Activated CD4-positive, alpha-beta T cell treated with anti-CD3 and anti-CD28 coated beads for 36 hours (primary cell): ENCODE measurements at regions of chr2 and their contacts with region 1.

Region 1: GRCh38 chr2:149587220-149587949 is at the start of gene MMADHC:
- DNase-seq: peak; percentile 96
- ATAC-seq: peak; percentile 99
- H3K4me3 Mint-ChIP-seq: peak within 1 kb of the TSS; percentile 92
- H3K27ac Mint-ChIP-seq: peak within 1 kb of the TSS; percentile 99
- H3K4me1 Mint-ChIP-seq: peaks cover 41% of the 10 kb centered on the region
- H3K27me3 Mint-ChIP-seq: peaks cover 12% of the 10 kb centered on the region
- total RNA-seq, gene MMADHC: 94.7 to 136 TPM

Region 2: GRCh38 chr2:148534416-148535204 is 1052.8 kb before region 1 on chr2:
- CTCF ChIA-PET with region 1: no interaction called
- POLR2A ChIA-PET with region 1: no interaction called
- intact Hi-C with region 1: loop called in 1 of 2 experiments (anchors 10 kb)
- DNase-seq: no peak
- ATAC-seq: no peak
- H3K4me3 Mint-ChIP-seq: no peak overlapping the region
- H3K27ac Mint-ChIP-seq: no peak overlapping the region
- H3K4me1 Mint-ChIP-seq: peaks cover 28% of the 10 kb centered on the region
- H3K27me3 Mint-ChIP-seq: no peaks in the 10 kb centered on the region

Region 3: DNA sequence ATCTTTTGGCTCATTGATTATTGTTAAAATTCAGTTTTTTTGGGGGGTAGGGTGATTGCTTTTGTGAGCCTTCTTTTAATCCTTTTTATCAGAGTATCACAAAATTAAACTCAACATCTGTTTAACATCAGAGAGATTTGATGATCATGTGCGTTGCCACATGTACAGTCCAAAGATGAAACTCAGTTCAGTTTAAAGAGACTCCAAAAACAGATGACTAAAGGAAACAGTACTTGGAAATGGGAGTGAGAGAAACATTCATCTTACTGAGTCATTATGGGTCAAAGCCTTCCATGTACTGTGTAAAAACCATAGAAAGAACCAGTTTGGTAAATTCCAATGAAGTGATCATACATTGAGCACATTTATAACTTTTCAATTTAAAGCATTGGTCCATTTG is 204.0 kb before region 1 on chr2:
- CTCF ChIA-PET with region 1: no interaction called
- POLR2A ChIA-PET with region 1: no interaction called
- intact Hi-C with region 1: no loop called
- DNase-seq: no peak
- ATAC-seq: peak; percentile 39
- H3K4me3 Mint-ChIP-seq: no peak overlapping the region
- H3K27ac Mint-ChIP-seq: no peak overlapping the region
- H3K4me1 Mint-ChIP-seq: no peaks in the 10 kb centered on the region
- H3K27me3 Mint-ChIP-seq: peaks cover 3% of the 10 kb centered on the region

Region 4: DNA sequence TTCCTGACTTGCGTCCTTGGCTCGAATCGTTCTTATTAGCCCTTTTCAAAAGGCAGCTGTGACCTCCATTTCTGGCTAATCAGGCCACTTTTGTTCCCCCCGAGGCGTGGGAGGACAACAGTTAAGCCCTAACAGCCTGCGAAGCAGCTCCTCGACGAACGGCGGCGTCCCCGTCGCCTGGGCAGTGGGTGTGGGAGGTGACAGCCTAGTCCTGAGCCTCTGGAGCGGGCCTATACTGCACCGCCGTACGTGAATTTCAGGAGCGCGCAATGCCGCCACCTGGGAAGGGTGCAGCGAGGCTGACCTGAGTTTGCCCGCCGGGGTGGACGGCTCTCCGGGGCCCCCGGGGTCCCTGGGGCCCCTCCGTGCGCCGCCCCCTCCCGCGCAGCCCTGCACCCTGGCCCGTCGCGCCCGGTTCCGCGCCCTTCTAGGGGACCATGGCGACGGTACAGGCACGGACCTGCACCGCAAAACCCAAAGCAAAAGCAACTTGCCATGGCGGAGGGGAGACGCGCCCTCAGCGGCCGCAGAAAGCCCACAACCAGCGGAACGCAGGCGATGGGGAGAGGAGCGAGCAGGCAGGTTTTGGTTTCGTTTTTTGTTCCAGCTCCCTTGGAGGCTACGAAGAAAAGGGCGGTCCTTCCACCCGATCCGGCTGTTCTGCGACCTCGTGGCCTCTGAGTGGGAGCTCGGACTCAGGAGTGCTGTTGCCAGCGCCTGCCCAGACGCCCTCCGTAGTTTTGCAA is 1674.0 kb after region 1 on chr2 and contains the start of gene RBM43:
- CTCF ChIA-PET with region 1: no interaction called
- POLR2A ChIA-PET with region 1: no interaction called
- intact Hi-C with region 1: loop called (anchors 1 to 2 kb)
- DNase-seq: peak; percentile 88
- ATAC-seq: peak; percentile 92
- H3K4me3 Mint-ChIP-seq: peak within 1 kb of the TSS; percentile 89
- H3K27ac Mint-ChIP-seq: peak within 1 kb of the TSS; percentile 98
- H3K4me1 Mint-ChIP-seq: peaks cover 18% of the 10 kb centered on the region
- H3K27me3 Mint-ChIP-seq: no peaks in the 10 kb centered on the region
- total RNA-seq, gene RBM43: 5.7 to 5.8 TPM

Region 5: DNA sequence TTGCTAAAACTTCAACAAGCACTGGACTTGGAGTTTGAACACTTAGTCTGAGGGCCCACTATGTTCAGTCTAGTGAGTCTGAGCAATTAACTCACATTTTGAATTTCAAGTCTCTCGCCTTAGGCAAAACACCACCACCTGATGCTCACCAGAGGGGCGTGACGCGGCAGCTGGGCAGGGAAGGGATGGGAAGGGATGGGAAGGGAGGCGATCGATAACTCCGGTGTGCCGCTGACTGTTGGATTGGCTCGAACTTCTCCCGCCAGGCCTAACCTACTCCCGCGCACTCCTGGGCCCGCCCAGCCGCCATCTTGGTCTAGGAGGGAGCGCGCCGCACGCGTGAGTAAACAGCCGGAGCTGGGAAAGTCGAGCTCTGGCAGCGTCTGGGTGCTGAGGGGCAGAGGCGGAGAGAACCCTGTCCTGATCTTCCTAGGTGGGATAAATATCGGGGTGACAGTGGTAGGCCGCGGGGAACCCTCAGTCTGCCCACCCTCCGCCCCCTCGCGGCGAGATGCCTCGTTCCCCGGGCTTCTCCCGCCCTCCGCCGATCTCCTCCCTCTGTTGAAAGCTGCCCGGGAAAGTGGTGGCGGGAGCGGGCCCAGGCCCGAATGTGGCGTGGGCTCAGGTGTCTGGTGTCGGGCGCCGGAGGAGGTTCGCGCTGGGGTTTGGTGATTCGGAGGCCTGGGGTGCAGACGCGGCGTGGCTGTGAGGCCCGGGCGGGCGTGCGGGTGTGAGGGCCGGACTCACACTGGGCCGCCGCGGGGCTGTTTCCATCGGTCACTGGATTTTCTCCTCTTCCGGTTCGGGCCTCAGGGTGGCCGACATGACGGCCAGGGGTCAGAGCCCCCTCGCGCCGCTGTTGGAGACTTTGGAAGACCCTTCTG is 1822.5 kb after region 1 on chr2 and contains the start of gene RIF1:
- CTCF ChIA-PET with region 1: no interaction called
- POLR2A ChIA-PET with region 1: no interaction called
- intact Hi-C with region 1: loop called in 1 of 2 experiments (anchors 2 kb)
- DNase-seq: peak; percentile 91
- ATAC-seq: peak; percentile 97
- H3K4me3 Mint-ChIP-seq: peak within 1 kb of the TSS; percentile 97
- H3K27ac Mint-ChIP-seq: peak within 1 kb of the TSS; percentile 98
- H3K4me1 Mint-ChIP-seq: peaks cover 28% of the 10 kb centered on the region
- H3K27me3 Mint-ChIP-seq: no peaks in the 10 kb centered on the region
- total RNA-seq, gene RIF1: 55.7 to 67.1 TPM